PC-9 (cell line): ENCODE measurements at regions of chr3 and their contacts with region 1.

Region 1: DNA sequence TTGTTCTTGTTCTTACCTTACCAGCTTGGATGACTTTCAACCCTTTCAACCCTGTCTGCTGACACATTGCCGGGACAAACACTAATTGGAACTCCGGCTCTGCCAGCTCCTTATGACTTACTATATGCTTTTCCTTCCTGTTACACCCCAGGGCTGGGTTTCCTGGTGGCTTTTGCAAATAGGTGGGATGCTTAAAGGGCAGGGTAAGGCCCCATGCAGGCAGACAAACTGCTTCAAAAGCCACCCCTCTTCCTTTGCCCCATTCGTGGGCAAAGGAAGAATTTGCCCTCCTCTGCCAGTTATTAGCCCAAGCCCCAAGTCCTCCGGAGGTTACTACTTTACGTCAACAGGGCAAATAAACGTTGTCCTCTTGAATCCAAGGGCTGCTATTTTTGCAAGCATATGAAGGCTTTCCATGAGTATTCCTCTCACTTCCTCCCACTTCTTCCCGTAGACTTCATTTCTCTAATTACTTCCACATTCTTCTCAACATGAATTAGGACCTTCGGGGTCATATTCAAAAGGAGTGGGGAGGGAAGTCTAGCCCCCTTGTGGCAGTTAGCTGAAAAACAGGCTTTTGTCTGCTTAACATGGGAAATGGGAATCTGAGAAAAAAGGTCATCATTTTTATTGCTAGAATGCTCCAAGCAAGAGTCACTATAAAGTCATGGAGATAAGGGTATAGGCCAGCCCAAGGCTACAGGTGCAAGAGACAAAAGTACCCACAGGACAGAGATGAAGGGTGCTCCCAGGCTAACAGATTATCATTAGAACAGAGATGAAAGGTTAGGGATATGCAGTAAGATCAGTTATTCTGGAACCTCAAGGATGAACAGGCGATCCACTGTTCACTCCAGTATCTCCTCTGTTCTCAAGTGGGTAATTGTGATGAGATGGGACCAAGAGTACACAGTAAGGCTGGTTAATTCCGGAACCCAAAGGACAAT is 56.3 kb upstream of the FSTL1 start:
- DNase-seq: peak; percentile 30 to 47
- H3K4me3 ChIP-seq: no peak overlapping the region
- H3K27ac ChIP-seq: no peak overlapping the region
- H3K4me1 ChIP-seq: peaks cover 9% of the 10 kb centered on the region
- H3K27me3 ChIP-seq: no peaks in the 10 kb centered on the region
- CTCF ChIP-seq: peak; percentile 76

Region 2: GRCh38 chr3:120424976-120425570 is 82.0 kb before region 1 on chr3:
- CTCF ChIA-PET with region 1: interaction called, 7 read pairs
- POLR2A ChIA-PET with region 1: interaction called, 20 read pairs
- intact Hi-C with region 1: no loop called
- DNase-seq: no peak
- H3K4me3 ChIP-seq: no peak overlapping the region
- H3K27ac ChIP-seq: no peak overlapping the region
- H3K4me1 ChIP-seq: no peaks in the 10 kb centered on the region
- H3K27me3 ChIP-seq: no peaks in the 10 kb centered on the region
- CTCF ChIP-seq: no peak